Ascending aorta (tissue), 2 donors: ENCODE measurements at regions of chr7 and their contacts with region 1.

Region 1: DNA sequence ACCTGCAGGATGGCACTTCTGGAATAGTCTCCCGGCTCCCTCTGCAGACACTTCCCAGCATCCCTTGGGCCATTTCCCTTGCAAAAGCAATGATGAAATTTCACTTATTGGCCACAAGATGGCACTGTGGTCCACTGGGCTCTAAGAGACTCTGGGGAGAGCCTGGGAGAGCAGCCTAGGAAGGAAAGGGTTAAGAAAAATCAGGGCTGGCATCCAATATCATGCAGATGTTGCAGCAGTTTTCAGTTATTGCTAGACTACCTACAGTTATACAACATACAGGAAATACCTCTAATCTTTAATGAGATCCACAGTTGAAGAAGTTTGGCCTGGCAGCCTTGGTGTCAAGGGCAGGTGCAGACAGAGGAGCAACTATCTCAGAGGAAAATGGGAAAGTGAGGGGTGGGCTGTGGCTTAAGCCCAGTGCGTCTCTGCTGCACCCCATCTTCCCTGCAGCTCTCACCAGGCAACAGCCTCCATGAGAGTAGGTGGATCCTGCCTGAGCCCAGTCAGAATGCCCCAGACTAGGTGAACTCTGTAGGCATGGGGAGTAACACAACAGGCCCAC is 100.2 kb upstream of the PRSS58 start:
- DNase-seq: no peak
- H3K4me3 ChIP-seq: no peak overlapping the region
- H3K27ac ChIP-seq: no peak overlapping the region
- H3K4me1 ChIP-seq: no peaks in the 10 kb centered on the region
- H3K27me3 ChIP-seq: no peaks in the 10 kb centered on the region
- CTCF ChIP-seq: peak in 2 of 3 experiments; percentile 32 to 52

Region 2: GRCh38 chr7:142420559-142421362 is 62.7 kb after region 1 on chr7:
- intact Hi-C with region 1: loop called (anchors 10 kb)
- DNase-seq: no peak
- H3K4me3 ChIP-seq: no peak overlapping the region
- H3K27ac ChIP-seq: no peak overlapping the region
- H3K4me1 ChIP-seq: no peaks in the 10 kb centered on the region
- H3K27me3 ChIP-seq: no peaks in the 10 kb centered on the region
- CTCF ChIP-seq: no peak